BJ (cell line): ENCODE measurements at regions of chr6 and their contacts with region 1.

Region 1: DNA sequence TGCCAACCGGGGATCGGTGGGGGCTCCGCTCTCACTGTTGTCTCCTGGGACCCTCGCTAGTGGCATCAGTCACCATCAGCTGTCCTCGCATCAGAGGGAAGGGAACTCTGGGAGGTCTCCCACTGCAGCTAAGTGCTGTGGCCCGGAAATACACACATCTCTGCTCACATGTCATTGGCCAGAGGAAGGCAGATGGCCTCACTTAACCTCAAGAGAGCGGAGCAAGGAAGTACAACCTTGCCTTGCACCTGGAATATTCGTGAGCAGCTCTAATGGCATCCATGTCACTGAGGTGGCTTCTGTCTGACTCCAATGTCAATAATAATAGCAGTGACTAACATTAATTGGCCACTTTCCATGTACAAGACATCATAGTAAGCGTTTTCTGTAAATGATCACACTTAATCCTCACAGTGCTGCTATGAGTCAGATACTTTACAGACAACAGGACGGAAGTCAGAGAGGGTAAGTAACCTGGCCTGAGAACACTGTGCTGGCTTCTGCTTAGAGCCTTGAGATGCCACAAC is 5.9 kb downstream of the LHFPL5 start:
- DNase-seq: no peak
- H3K4me3 ChIP-seq: no peak overlapping the region
- H3K27me3 ChIP-seq: no peaks in the 10 kb centered on the region
- CTCF ChIP-seq: no peak

Region 2: GRCh38 chr6:35463292-35463691 is 347.7 kb before region 1 on chr6:
- CTCF ChIA-PET with region 1: no interaction called
- POLR2A ChIA-PET with region 1: interaction called, 12 read pairs
- DNase-seq: no peak
- H3K4me3 ChIP-seq: no peak overlapping the region
- H3K27me3 ChIP-seq: no peaks in the 10 kb centered on the region
- CTCF ChIP-seq: no peak